ENCODE measurements at regions of chr11 and their contacts with region 1.

Region 1: GRCh38 chr11:64358907-64359711 is at the start of gene RPS6KA4:
- DNase-seq: peak; percentile 82
- ATAC-seq: peak; percentile 69
- H3K4me3 ChIP-seq: peak within 1 kb of the TSS; percentile 92
- H3K27ac ChIP-seq: peak within 1 kb of the TSS; percentile 40
- H3K4me1 ChIP-seq: peaks cover 36% of the 10 kb centered on the region
- H3K27me3 ChIP-seq: no peaks in the 10 kb centered on the region
- CTCF ChIP-seq: no peak; the same call in 1 of the 2 replicates
- total RNA-seq, gene RPS6KA4: 148 and 189 TPM in 2 replicates

Region 2: DNA sequence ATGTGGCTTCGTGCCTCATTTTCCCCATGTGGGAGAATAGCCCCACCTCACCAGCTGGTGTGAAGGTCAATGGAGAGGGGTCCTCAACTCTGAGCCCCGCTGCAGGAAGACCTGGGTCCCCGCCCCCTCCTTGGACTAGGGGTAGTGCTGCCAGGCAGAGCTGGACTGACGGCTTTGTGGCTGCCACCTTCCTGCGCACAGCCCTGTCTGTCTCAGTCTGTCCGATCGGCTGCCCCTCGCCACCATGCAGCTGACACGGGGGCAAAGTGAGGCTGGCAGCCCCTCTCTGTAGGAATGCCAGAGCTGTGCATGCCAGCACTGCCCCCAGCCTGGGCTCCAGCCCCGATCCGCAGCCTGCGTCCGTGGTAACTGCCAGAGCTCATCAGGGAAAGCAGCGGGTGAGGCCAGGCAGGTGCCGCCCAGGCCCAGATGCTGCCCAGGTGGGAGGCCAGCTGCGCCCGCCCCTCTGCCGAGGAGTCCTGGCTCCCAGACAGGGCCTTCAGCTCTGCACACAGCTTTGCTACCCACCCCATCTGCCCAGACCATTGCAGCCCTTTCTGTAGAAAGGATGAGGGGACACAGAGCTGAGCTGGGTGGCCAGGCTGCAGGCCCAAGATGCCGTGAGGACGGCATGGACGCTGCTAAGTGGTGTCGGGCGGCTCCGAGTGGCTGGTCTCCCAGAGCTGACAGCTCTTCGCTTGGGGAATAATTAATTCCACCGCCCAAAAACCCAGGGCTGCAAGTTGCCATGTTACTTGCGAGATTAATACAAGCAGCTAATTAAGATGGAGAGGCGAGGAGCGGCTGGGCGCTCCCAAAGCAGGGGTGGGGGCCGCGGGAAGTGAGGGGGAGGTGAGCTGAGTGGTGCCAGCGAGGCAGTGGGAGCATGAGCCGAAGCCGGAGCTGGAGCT is 342.9 kb before region 1 on chr11:
- CTCF ChIA-PET with region 1: no interaction called
- POLR2A ChIA-PET with region 1: no interaction called
- intact Hi-C with region 1: no loop called
- DNase-seq: no peak
- ATAC-seq: no peak
- H3K4me3 ChIP-seq: no peak overlapping the region
- H3K27ac ChIP-seq: no peak overlapping the region
- H3K4me1 ChIP-seq: no peaks in the 10 kb centered on the region
- H3K27me3 ChIP-seq: no peaks in the 10 kb centered on the region
- CTCF ChIP-seq: no peak

Region 3: DNA sequence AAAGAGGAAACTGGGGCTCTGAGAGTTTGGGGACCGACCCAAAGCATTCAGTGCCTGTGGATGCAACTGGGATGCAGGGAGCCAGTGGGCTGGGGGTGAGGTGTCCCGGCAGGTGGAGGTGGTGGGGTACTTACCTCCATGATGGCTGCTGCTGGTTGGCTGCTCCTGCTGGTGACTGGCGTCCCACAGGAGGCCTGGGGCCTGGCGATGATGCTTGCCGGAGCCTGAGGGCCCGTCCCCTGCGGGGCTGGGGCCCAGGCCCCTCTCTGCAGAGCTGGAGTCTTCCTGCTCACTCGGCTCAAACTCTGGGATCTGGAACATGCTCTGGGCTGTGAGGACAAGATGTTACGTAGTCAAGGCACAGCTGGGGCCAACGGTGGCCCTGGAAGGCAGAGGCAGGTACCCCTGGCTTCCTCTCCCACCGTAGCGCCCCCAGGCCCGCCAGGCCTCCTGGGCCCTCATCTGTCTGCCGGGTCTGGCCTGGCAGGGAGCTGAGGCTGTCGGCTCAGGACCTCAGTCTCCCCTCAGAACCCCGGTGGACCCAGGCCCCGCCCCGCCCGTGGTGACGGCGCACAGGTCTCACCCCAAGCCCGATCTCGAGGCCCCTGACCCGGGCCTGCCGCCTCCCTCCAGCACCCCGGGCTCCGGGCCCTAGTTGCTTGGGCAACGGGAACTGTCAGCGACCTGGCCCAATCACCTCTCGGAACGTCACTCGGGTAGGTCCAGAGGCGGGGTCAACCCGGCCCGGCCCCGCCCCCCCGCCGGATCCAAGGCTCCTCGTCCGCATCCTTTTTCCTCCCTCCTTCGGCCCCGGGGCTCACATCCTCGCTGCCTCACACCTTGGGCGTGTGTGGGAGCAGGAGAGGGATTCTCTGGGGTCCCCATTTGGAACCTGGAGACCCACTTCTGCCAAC is 74.8 kb before region 1 on chr11 and contains the start of gene BAD:
- CTCF ChIA-PET with region 1: interaction called, 17 read pairs
- POLR2A ChIA-PET with region 1: no interaction called
- intact Hi-C with region 1: no loop called
- DNase-seq: peak; percentile 97
- ATAC-seq: peak; percentile 89
- H3K4me3 ChIP-seq: peak within 1 kb of the TSS; percentile 73
- H3K27ac ChIP-seq: peak within 1 kb of the TSS; percentile 62
- H3K4me1 ChIP-seq: peaks cover 18% of the 10 kb centered on the region
- H3K27me3 ChIP-seq: no peaks in the 10 kb centered on the region
- CTCF ChIP-seq: no peak
- total RNA-seq, gene BAD: 360 and 368 TPM in 2 replicates

Region 4: GRCh38 chr11:64331557-64332371 is 27.3 kb before region 1 on chr11:
- CTCF ChIA-PET with region 1: interaction called, 26 read pairs
- POLR2A ChIA-PET with region 1: no interaction called
- intact Hi-C with region 1: no loop called
- DNase-seq: peak; percentile 96
- ATAC-seq: peak; percentile 56
- H3K4me3 ChIP-seq: peak overlapping the region; percentile 22; the same call in 1 of the 2 replicates
- H3K27ac ChIP-seq: peak overlapping the region; percentile 88
- H3K4me1 ChIP-seq: peaks cover 37% of the 10 kb centered on the region
- H3K27me3 ChIP-seq: no peaks in the 10 kb centered on the region
- CTCF ChIP-seq: peak; percentile 85

Region 5: DNA sequence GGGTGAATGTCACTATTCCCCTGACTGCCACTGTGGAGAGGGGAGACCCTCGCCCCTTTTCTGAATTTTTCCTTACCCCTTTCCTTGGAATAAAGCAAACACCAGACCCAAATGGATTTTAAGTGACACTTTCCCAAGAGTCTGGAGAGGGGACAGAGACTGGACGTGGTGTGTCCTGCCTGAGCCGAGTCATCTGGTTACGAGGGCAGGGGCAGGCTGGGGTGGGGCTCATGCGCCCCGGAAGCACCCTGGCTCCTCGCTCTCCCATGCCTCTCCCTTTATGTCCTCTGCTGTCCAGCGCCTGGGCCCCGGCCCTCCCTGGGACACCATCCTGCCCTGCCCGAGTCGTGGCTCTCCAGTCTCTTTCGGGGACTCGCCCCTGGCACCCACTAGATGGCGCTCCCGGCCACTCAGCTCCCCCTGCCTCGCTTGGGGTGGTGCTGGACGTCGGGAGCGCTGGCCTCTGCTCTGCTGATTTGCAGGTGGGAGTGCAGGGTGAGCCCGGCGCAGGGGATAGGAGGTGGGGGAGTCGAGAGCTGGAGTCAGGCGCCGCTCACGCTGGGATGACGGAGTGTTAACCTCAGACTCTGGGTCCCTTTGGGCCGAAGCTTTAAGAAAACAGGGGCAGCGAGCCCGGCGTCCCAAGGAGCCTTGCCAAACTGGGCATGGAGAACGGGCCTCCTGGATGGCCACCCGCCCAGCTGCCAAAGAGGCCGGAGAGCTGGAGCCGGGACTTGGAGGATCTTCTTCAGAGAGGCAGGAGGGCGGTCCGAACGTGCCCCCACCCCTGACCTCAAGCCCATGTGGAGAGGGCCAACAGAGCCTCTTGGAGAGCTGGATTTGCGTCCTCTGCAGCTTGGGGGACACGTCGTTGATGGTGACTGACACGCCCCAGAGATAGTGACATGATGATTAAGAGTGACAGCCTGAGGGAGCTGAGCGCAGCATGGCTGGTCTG is 89.8 kb after region 1 on chr11:
- CTCF ChIA-PET with region 1: interaction called, 12 read pairs
- POLR2A ChIA-PET with region 1: interaction called, 4 read pairs
- intact Hi-C with region 1: loop called (anchors 5 kb)
- DNase-seq: peak; percentile 90
- ATAC-seq: peak; percentile 90
- H3K4me3 ChIP-seq: peak overlapping the region; percentile 62
- H3K27ac ChIP-seq: no peak overlapping the region
- H3K4me1 ChIP-seq: peaks cover 23% of the 10 kb centered on the region
- H3K27me3 ChIP-seq: no peaks in the 10 kb centered on the region
- CTCF ChIP-seq: peak; percentile 93